ENCODE measurements at regions of chr1 and their contacts with region 1.

Region 1: GRCh38 chr1:212432706-212433576 is at the start of gene NENF:
- DNase-seq: peak; percentile 53 to 94 (median 88)

Region 2: GRCh38 chr1:212368073-212368484 is 64.9 kb before region 1 on chr1:
- intact Hi-C with region 1: loop called (anchors 5 kb)
- DNase-seq: peak in 35 of 42 donors; percentile 15 to 81 (median 54)

Region 3: DNA sequence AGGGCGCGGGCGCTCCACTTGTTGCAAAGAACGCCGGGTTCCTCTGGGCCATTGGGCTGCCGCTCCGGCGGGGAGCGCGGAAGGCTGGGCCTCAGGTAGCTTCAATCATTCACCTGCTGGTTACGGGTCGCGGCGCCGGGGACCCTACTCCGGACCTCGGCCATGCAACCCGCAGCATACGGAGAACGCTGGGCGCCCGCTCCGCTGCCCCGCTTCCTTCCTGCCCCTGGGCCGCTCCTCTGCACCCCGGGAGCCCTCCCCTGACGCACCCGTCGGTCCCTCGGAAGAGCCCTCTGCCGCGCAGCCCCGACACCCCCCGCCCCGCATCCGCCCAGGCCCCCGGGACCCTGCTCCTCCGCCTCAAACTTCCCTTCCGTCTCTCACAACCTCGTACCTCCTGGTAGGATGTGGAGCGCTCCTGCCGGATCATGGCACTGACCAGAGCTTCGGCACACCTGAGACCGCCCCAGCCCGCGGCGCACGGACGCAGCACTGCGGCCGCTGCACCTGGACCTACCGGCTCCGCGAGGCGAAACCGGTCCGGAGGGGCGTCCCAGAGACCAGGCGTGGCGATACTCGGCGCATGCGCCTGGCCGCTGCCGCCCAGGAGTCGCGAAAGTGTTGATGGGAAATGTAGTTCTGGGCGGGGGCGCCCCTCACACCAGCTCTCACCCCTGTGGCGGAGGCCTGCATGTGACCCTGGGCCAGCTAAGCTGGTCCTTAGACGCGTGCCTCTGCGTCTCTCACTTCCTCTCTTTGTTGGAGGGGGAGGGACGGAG is 18.4 kb before region 1 on chr1 and contains the start of gene PACC1:
- intact Hi-C with region 1: loop called (anchors 2 kb)
- DNase-seq: peak; percentile 85 to 96 (median 92)

Region 4: DNA sequence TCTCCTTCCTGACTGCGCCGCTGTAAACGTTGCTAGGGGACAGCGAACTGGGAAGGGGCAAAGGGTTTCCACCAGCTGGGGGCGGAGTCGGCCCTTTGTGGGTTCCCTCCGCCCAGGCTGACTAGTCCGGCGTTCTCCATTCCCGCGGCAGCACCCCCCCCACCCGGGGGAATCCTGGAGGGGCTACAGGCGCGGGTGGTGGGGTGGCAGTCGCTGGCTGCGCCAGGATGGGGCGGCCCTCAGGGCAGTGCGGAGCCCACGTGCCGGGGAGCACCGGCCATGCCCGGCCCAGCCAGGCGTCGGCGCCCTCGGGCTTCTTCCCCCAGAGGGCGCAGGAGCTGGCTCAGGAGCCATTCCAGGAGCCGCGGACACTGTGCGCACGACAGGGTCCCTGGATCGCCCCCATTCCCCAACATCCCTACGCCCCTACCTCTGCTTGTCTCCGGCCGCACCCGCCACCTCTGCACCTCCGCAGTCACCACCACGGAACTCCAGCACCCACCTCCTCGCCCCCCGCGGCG is 266.2 kb after region 1 on chr1:
- intact Hi-C with region 1: no loop called
- DNase-seq: peak in 35 of 42 donors; percentile 11 to 60 (median 34)

Measured in head of caudate nucleus (tissue), 42 donors.